ENCODE measurements at regions of chr7 and their contacts with region 1.

Region 1: DNA sequence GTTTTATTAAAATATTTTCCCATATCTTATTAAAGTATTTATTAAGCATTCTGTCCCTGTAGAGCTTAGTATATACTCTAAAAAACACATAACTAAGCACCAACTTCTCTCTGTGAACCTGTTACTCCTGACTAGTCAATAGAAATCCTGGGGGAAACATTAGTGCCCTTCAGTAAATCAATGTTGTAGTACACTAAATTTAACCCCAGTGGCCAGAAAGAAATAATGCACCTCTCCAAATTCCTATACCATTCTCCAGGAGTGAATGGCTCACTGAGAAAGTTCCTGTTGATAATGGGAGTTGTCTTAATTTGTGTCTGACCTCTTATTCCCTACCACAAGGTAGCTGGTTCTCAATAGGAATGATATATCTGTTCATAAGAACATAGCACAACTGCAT is 188.2 kb downstream of the SEMA3D start:
- DNase-seq: no peak
- ATAC-seq: no peak
- H3K4me3 Mint-ChIP-seq: no peak overlapping the region
- H3K27ac Mint-ChIP-seq: no peak overlapping the region
- H3K4me1 Mint-ChIP-seq: no peaks in the 10 kb centered on the region
- H3K27me3 Mint-ChIP-seq: no peaks in the 10 kb centered on the region

Region 2: DNA sequence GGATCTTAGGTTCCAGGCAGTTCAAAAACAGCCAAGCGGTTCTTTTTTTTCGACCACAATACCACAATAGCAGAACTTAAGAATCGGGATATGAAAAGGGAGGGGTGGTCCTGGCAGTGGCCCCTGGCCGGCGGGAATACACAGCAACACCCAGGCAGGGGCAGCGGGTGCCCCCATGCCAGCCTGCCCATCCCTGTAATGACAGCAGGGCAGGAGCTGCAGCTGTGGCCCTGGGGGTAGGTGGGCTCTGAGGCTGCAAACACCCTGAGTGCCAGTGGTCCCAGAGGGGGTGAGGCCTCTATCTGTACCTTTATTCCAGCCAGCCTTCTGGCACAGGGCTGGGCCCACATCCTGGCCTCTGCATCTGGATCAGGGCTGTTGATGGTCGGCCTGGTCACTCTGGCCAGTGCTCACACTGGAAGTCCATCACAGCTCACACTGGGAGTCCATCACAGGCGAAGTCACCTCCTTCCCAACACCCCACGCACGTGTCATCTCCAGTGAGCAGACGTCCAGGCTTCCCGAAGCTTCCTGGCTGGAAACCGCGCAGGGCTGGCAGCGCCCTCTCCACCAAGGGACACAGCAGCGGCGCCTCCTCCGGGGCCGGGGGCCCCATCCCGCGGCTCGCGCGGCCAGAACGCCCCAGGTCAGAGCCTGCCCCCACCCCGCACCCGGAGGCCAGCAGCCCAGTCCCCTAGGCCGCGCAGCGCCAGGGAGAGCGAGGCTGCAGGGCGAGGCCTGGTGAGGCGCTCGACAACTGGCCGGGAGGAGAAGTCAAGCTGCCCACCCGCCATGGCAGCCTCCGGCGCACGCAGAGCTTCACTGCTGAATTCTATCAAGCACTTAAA is 59.0 kb before region 1 on chr7:
- CTCF ChIA-PET with region 1: no interaction called
- POLR2A ChIA-PET with region 1: no interaction called
- intact Hi-C with region 1: loop called in 1 of 2 experiments (anchors 10 kb)
- DNase-seq: no peak
- ATAC-seq: no peak
- H3K4me3 Mint-ChIP-seq: no peak overlapping the region
- H3K27ac Mint-ChIP-seq: no peak overlapping the region
- H3K4me1 Mint-ChIP-seq: no peaks in the 10 kb centered on the region
- H3K27me3 Mint-ChIP-seq: no peaks in the 10 kb centered on the region

Measured in activated CD4-positive, alpha-beta T cell treated with anti-CD3 and anti-CD28 coated beads for 36 hours (primary cell).